Activated naive CD4-positive, alpha-beta T cell treated with anti-CD3 and anti-CD28 coated beads for 36 hours (primary cell): ENCODE measurements at regions of chr2 and their contacts with region 1.

Region 1: DNA sequence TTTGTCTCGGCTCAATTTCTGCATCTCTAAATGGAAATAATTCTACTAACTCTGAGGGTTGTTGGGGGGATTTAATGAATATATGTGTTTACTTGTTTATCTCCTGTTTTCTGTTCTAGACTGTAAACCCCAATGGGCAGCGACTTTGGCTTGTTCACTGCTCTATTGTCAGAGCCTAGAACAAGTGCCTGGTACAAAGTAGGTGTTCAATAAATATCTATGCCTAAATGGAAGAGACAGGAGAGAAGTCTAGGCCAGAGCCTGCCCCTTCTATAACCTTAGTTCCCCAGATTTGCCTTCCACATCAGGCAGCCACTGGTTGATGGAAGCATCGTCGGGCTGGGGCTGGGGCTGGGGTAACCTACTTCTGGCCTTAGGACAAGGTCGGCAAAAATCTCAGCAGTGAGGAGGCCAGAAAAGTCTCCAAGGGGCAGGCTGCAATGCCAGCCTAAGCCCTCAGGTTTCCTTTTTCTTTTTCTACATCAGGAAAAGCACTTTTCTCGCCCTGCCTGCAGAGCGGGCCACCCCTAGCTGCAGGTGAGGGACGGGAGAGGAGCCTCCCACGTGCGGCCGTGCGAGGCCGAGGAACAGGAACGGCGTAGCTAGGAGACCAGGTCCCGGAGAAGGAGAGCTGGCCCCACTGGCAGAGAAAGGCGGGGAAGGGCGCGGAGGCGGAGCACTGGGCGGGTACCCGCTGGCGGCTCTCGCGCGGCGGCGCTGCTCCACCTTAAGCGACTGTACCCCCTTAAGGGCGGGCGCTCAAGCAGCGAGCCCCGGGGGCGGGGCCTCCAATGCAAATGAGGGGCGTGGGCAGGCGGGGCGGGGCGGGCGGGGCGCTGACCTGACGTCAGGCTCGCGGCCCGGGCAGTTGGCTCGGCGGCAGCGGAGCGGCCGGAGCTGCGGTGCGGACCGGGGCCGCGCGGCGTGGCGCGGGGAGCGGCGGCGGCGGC is at the start of gene CNNM4:
- DNase-seq: peak; percentile 94
- H3K4me3 Mint-ChIP-seq: peak within 1 kb of the TSS; percentile 81
- H3K27ac Mint-ChIP-seq: peak within 1 kb of the TSS; percentile 70
- H3K4me1 Mint-ChIP-seq: peaks cover 48% of the 10 kb centered on the region
- H3K27me3 Mint-ChIP-seq: no peaks in the 10 kb centered on the region
- total RNA-seq, gene CNNM4: 5.6 to 6.0 TPM

Region 2: DNA sequence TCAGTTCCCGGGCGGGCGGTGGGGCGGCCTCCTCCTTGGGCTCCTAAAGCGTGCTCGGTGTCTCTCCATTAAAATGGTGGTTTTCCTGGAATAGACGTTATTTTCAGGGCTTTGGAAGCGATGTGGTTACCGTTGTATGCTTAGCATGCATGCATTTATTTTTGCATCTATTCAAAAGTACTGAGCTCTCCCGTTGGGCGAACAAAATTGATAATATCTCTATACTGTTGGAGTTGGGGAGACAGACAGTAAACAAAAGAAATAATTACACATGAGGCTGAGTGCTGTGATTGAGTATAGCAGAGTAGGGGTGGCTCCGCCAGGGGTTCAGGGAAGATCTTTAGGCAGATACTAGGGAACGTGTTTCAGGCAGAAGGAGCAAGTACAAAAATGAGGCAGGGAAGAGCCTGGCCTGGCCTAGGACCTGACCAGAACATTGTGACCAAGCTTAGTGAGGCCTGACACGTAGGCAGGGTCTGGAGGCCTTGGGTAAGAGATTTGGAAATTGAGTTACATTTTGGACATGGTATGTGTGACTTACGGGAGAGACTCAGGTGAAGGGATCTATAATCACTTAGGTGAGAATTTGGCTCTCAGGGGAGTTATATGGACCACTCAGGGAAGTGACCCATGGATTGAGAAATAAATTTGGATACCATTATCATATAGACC is 424.1 kb before region 1 on chr2:
- CTCF ChIA-PET with region 1: no interaction called
- intact Hi-C with region 1: loop called (anchors 5 kb)
- DNase-seq: no peak
- H3K4me3 Mint-ChIP-seq: peak overlapping the region; percentile 87
- H3K27ac Mint-ChIP-seq: peak overlapping the region; percentile 72
- H3K4me1 Mint-ChIP-seq: peaks cover 51% of the 10 kb centered on the region
- H3K27me3 Mint-ChIP-seq: no peaks in the 10 kb centered on the region

Region 3: DNA sequence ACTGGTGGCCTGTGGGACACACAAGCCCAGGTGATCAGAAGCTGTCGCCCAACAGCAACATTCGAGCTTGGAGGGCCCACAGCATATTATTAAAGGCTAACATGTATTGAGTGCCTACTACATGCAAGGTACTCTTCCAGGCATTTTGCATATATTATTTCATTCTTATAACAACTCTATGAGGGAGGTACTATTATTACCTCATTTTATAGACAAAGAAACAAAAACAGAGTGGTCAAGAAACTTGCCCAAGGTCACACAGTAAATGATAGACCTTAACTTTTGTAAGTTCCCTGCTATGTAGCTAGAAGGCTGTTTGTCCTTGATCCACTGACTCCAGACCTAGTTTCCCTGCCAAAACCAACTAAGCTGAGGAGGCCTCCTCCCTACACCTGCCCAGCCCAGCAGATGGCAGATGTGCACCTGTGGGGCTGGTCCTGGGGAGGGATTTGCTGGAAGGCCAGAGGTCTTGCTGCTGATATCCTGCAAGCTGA is 157.9 kb before region 1 on chr2:
- CTCF ChIA-PET with region 1: interaction called, 3 read pairs
- intact Hi-C with region 1: loop called (anchors 5 kb)
- DNase-seq: peak; percentile 26
- H3K4me3 Mint-ChIP-seq: no peak overlapping the region
- H3K27ac Mint-ChIP-seq: no peak overlapping the region
- H3K4me1 Mint-ChIP-seq: peaks cover 9% of the 10 kb centered on the region
- H3K27me3 Mint-ChIP-seq: no peaks in the 10 kb centered on the region

Region 4: GRCh38 chr2:96710985-96711384 is 49.3 kb before region 1 on chr2:
- CTCF ChIA-PET with region 1: no interaction called
- intact Hi-C with region 1: loop called (anchors 5 kb)
- DNase-seq: no peak
- H3K4me3 Mint-ChIP-seq: no peak overlapping the region
- H3K27ac Mint-ChIP-seq: no peak overlapping the region
- H3K4me1 Mint-ChIP-seq: no peaks in the 10 kb centered on the region
- H3K27me3 Mint-ChIP-seq: no peaks in the 10 kb centered on the region

Region 5: DNA sequence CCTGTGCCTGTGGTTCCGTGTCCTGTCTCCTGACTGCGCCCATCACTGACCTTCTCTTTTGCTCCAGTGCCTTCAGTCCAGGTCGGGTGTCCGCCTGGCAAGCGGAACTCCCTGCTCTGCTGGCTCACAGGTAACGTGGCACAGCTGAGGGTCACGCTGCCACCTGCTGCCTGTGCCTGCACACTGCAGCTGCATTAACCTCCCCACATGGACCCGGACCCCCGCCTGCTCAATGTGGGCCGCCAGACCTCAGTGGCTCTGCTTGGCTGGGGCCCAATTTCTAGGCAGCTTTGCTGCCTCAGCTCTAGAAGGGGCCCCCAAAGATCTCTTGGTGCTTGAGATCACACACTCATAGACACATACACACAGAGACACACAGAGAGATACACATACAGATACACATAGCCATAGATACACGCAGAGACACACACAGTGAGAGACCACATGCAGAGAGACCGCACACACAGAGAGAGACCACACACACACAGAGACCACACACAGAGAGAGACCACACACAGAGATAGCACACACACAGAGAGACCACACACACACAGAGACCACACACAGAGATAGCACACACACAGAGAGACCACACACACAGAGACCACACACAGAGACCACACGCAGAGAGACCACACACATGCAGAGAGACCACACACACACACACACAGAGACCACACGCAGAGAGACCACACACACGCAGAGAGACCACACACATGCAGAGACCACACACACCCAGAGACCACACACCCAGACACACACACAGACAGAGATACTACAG is 40.9 kb after region 1 on chr2:
- CTCF ChIA-PET with region 1: interaction called, 12 read pairs
- intact Hi-C with region 1: loop called (anchors 1 kb)
- DNase-seq: peak; percentile 83
- H3K4me3 Mint-ChIP-seq: no peak overlapping the region
- H3K27ac Mint-ChIP-seq: no peak overlapping the region
- H3K4me1 Mint-ChIP-seq: peaks cover 2% of the 10 kb centered on the region
- H3K27me3 Mint-ChIP-seq: no peaks in the 10 kb centered on the region

Region 6: DNA sequence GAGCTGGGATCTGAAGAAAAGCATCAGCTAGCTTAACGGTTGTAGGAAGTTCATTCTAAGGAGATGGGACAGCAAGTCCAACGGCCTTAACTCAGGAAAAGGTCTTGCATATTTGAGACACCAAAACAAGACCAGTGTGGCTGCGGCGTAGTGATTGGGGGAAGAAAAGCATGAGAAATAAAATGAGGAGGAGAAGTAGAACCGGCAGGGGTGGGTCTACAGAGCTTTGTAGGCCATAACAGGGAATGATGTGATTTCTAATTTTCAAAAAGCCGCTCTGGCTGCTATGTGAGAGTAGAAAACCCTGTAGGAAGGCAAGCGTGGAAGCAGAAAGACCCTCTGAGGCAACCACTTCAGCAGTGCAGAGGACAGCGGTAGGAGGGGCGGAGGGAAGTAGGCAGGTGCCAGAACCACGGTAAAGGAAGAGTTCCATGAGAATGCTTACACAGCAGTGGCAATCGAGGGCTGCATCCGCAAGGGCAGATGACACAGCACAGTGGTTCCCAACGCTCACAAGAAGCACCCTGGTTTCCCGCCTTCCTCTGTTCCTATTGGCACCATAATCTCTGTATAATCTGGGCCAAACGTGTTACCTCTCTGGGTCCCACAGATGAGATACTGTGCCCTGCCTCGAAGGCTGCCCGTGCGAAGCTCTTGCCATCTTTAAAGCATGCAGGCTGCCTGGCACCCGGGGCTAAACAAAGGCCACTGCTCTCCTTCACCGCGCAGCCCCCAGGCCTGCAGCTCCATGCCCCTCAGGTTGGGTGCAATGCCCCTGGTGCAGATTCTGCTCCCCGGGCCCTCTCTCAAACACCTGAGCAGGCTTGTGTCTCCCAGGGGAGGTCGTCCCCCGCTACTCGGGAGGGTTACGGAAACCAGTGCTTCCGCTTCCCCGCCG is 96.7 kb after region 1 on chr2:
- CTCF ChIA-PET with region 1: interaction called, 5 read pairs
- intact Hi-C with region 1: loop called (anchors 5 kb)
- DNase-seq: peak; percentile 65
- H3K4me3 Mint-ChIP-seq: peak overlapping the region; percentile 86
- H3K27ac Mint-ChIP-seq: peak overlapping the region; percentile 71
- H3K4me1 Mint-ChIP-seq: peaks cover 34% of the 10 kb centered on the region
- H3K27me3 Mint-ChIP-seq: no peaks in the 10 kb centered on the region